ENCODE measurements at regions of chr2 and their contacts with region 1.

Region 1: DNA sequence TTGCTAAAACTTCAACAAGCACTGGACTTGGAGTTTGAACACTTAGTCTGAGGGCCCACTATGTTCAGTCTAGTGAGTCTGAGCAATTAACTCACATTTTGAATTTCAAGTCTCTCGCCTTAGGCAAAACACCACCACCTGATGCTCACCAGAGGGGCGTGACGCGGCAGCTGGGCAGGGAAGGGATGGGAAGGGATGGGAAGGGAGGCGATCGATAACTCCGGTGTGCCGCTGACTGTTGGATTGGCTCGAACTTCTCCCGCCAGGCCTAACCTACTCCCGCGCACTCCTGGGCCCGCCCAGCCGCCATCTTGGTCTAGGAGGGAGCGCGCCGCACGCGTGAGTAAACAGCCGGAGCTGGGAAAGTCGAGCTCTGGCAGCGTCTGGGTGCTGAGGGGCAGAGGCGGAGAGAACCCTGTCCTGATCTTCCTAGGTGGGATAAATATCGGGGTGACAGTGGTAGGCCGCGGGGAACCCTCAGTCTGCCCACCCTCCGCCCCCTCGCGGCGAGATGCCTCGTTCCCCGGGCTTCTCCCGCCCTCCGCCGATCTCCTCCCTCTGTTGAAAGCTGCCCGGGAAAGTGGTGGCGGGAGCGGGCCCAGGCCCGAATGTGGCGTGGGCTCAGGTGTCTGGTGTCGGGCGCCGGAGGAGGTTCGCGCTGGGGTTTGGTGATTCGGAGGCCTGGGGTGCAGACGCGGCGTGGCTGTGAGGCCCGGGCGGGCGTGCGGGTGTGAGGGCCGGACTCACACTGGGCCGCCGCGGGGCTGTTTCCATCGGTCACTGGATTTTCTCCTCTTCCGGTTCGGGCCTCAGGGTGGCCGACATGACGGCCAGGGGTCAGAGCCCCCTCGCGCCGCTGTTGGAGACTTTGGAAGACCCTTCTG is at the start of gene RIF1:
- DNase-seq: peak; percentile 90 to 92
- H3K4me3 ChIP-seq: peak within 1 kb of the TSS; percentile 77 to 94 (median 82)
- H3K27ac ChIP-seq: peak within 1 kb of the TSS; percentile 99
- H3K4me1 ChIP-seq: peaks cover 0 to 7% (median 3%) of the 10 kb centered on the region in 4 experiments; a peak in 3 of 7 replicates
- H3K27me3 ChIP-seq: no peaks in the 10 kb centered on the region
- CTCF ChIP-seq: peak; percentile 14 to 42 (median 41); a peak in 3 of 4 replicates
- EP300 ChIP-seq: peak in 1 of 2 experiments; percentile 80; a peak in 1 of 3 replicates
- POLR2A ChIP-seq: peak; percentile 91 to 92
- RAD21 ChIP-seq: peak; percentile 0 to 18; a peak in 2 of 4 replicates
- total RNA-seq, gene RIF1: 94.0 and 104 TPM in 2 replicates

Region 2: DNA sequence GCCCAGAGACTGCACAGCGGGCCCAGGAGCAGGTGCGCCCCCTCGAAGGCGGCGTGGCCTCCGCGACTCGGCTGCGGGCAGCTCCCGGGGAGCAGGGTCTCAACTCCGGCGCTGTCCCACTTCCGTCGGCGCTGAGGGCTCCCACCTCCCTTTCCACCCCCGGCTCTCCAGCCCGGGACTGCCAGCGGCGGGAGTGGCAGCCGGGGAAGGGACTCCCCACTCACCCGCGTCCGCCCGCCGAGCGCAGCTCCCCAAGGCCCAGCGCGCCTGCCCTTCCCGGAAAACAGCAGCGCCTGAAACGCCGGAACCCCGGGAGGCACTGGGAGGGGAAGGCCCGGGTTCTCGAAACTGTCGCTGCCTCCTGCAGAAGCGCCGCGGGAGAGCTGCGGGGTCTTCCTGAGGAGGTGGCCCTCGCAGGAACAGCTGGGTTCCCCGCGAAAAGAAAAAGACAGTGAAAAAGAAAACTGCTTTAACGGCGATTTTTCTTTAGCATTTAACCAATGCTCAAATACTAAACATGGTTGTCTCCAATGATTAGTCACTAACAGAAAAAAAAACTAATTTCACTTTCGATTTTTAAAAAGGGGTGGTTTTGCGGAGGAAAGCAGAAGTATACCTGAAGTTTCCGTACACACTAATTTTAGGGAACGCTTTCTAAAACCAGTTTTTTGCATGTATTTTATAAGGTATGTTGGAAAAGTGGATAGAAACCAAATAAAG is 120.3 kb before region 1 on chr2 and contains the start of gene NMI:
- CTCF ChIA-PET with region 1: no interaction called
- POLR2A ChIA-PET with region 1: interaction called, 14 read pairs
- DNase-seq: peak in 1 of 2 experiments; percentile 76
- H3K4me3 ChIP-seq: peak within 1 kb of the TSS; percentile 36 to 65 (median 52)
- H3K27ac ChIP-seq: no peak within 1 kb of the TSS
- H3K4me1 ChIP-seq: peaks cover 0 to 4% (median 2%) of the 10 kb centered on the region in 4 experiments; a peak in 2 of 7 replicates
- H3K27me3 ChIP-seq: no peaks in the 10 kb centered on the region
- CTCF ChIP-seq: no peak
- EP300 ChIP-seq: no peak
- POLR2A ChIP-seq: peak in 1 of 2 experiments; percentile 40; a peak in 1 of 3 replicates
- RAD21 ChIP-seq: no peak
- total RNA-seq, gene NMI: 4.5 and 5.0 TPM in 2 replicates